ENCODE measurements at regions of chr11 and their contacts with region 1.

Region 1: GRCh38 chr11:73218106-73218829 is at the start of gene P2RY2:
- DNase-seq: peak; percentile 66
- H3K4me3 Mint-ChIP-seq: peak within 1 kb of the TSS; percentile 73
- H3K27ac Mint-ChIP-seq: no peak within 1 kb of the TSS
- H3K4me1 Mint-ChIP-seq: peaks cover 6% of the 10 kb centered on the region
- H3K27me3 Mint-ChIP-seq: no peaks in the 10 kb centered on the region
- CTCF ChIP-seq: peak; percentile 43
- total RNA-seq, gene P2RY2: 0.56 and 1.0 TPM in 2 replicates

Region 2: DNA sequence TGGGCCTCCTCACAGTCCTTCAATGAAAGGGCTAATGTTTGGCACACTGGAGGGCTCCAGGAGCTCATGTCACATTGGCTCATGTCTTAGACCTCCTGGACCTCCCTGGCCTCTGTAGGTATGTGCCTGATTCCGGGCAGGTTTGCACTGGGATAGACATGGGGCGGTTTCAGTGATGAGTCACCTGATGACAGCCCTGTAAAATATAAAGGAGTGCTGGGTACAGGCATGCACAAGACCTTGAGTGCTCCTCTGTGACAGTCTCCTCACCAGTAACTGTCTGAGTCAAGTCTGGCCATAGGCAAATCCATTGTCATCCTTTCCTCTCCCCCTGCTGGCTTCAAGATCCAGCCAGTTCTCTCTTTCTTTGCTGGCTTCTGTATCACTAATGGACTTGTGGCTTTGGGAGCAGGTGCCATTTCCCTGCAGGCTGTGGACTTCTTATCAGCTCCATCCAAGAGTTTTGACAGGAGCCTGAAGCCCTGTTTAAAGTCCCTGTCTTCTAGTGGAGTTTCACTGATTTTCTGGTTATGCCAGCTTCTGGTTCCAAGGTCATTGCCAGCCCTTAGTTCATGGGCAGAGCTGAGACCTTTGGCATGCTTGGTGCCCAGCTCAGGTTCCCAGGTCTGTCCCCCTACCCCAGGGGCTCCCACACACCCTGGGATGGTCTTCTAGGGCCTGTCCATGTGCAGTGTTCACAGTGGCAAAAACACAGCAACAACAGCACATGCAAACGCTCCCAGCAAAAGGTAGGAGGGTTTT is 22.9 kb before region 1 on chr11:
- CTCF ChIA-PET with region 1: interaction called, 8 read pairs
- POLR2A ChIA-PET with region 1: interaction called, 4 read pairs
- intact Hi-C with region 1: loop called (anchors 2 kb)
- DNase-seq: peak; percentile 89
- H3K4me3 Mint-ChIP-seq: no peak overlapping the region
- H3K27ac Mint-ChIP-seq: no peak overlapping the region
- H3K4me1 Mint-ChIP-seq: peaks cover 61% of the 10 kb centered on the region
- H3K27me3 Mint-ChIP-seq: no peaks in the 10 kb centered on the region
- CTCF ChIP-seq: no peak

Region 3: DNA sequence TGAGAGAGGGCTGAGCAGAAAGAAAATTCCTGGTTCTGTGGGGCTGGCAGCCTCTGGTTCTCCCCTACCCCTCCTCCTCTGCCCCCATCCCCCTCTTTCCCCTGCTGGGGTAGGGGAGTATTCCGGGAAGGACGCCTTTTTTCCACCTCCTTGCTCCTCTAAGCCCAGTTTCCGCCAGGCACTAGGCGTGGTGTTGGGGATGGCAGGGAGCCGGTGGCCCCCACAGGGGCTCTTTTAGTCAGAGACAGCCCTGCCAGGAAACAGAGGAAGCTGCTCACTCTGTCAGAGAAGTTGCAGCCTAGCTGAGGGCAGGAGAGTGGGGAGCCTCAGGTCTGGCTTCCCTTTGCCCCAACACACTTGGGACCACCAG is 74.2 kb after region 1 on chr11:
- CTCF ChIA-PET with region 1: no interaction called
- POLR2A ChIA-PET with region 1: no interaction called
- intact Hi-C with region 1: no loop called
- DNase-seq: no peak
- H3K4me3 Mint-ChIP-seq: no peak overlapping the region
- H3K27ac Mint-ChIP-seq: no peak overlapping the region
- H3K4me1 Mint-ChIP-seq: peaks cover 11% of the 10 kb centered on the region
- H3K27me3 Mint-ChIP-seq: no peaks in the 10 kb centered on the region
- CTCF ChIP-seq: no peak